ENCODE measurements at regions of chr7 and their contacts with region 1.

Region 1: GRCh38 chr7:108146070-108146837 is 16.1 kb upstream of the LAMB4 start:
- DNase-seq: peak; percentile 80
- H3K4me3 ChIP-seq: peak overlapping the region; percentile 39; the same call in 1 of the 2 replicates
- H3K27ac ChIP-seq: no peak overlapping the region
- H3K27me3 ChIP-seq: no peaks in the 10 kb centered on the region
- CTCF ChIP-seq: peak; percentile 98

Region 2: DNA sequence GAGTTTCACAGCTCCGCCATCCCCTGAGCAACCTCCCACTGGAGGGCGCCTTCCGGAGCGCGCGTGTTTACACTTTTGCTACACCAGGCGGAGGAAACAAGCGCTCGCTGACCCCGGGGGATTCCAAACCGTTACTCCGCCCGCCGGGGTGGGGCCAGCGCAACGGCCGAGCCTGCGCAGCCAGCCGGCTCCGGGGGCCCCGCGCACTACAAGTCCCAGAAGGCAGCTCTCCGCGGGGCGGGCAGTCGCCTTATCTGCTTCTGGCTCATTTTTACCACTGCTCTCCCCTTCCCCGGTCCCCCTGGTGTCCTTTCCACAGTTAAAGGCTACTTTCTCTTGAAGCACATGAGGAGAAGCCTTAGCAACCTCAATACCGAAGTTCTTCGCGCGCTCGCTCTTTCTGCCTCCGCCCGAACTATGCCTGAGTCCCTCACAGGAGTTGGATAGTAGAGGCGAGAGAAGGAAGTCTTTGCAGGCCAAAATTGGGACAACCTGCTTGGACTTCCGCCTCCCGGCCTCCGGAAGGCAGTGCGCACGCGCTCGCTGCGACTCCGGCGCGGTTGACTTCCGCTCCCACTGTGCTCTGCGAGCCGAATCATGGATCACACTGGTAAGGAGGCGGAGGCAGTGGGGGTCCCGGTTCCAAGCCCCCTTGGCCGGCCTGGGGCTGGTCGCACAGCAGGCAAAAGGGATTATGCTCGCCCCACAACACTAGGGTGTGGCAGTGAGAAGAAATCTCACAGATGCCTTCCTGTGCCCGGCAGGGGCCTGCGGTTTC is 402.5 kb before region 1 on chr7 and contains the start of gene CBLL1:
- CTCF ChIA-PET with region 1: interaction called, 12 read pairs
- POLR2A ChIA-PET with region 1: interaction called, 3 read pairs
- DNase-seq: peak; percentile 87
- H3K4me3 ChIP-seq: peak within 1 kb of the TSS; percentile 94
- H3K27ac ChIP-seq: peak within 1 kb of the TSS; percentile 99
- H3K27me3 ChIP-seq: no peaks in the 10 kb centered on the region
- CTCF ChIP-seq: peak; percentile 81
- polyA plus RNA-seq, gene CBLL1: 17.0 and 18.0 TPM in 2 replicates

Region 3: DNA sequence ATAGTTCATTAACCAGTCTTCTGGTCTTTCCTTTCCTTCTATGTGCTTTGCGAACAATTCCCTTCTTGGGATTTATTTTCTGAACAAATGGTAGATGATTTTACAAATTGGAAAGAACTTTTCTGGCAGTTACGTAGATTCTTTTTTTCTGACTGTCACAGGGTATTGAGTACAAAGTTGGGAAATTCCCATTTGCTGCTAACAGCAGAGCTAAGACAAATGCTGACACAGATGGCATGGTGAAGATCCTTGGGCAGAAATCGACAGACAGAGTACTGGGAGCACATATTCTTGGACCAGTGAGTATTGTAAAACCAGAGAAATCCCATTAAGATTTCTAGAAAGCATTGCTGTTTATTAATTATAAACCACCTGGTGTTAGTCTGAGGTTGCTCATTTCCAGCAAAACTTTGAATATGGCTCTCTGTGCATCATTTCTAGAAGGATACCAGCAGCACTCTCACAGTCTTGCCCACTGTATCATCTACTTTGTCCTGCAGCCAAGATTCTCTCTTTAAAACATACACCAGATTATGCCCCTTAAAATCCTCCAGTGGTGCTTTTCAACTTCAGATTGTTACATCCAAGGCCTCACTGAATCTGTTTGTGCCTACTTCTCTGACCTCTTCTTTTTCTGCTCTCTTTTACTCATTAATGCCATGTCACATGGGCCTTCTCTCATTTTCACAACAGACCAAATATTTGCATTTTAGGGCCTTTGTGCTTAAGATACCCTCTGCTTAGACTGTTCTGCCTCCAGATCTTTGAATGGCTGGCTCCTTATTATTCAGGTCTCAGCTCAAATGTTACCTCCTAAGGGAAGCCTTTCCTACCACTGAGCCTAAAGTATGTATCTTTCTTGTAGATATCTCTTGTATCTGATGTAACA is 228.2 kb before region 1 on chr7:
- CTCF ChIA-PET with region 1: interaction called, 18 read pairs
- POLR2A ChIA-PET with region 1: no interaction called
- DNase-seq: no peak
- H3K4me3 ChIP-seq: no peak overlapping the region
- H3K27ac ChIP-seq: no peak overlapping the region
- H3K27me3 ChIP-seq: no peaks in the 10 kb centered on the region
- CTCF ChIP-seq: no peak

Region 4: GRCh38 chr7:107958764-107959526 is 187.3 kb before region 1 on chr7:
- CTCF ChIA-PET with region 1: interaction called, 12 read pairs
- POLR2A ChIA-PET with region 1: no interaction called
- DNase-seq: no peak
- H3K4me3 ChIP-seq: no peak overlapping the region
- H3K27ac ChIP-seq: peak overlapping the region; percentile 3
- H3K27me3 ChIP-seq: no peaks in the 10 kb centered on the region
- CTCF ChIP-seq: no peak

Region 5: DNA sequence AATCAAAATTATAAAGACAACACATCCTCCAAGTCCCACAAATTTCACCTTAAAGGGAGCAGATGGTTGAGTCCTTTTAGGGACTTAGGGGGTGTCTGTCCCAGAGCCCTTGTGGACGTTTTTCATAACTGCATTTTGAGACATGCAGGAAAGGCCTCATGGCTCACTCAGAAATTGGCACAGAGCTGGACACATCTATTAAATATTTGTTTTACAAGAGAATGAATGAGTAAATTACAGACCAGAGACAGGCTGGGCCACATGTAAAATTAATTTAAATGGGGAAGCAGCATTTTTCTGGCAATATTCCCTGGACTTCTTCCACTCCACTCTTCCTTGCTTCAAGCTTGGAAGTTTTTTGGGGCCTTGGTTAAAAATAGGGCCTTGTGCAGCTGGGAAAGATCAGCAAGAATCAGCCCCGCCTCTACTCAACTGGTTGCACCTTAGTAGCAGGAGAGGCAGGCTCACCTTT is 163.3 kb before region 1 on chr7:
- CTCF ChIA-PET with region 1: interaction called, 27 read pairs
- POLR2A ChIA-PET with region 1: interaction called, 3 read pairs
- DNase-seq: no peak
- H3K4me3 ChIP-seq: no peak overlapping the region
- H3K27ac ChIP-seq: peak overlapping the region; percentile 39
- H3K27me3 ChIP-seq: no peaks in the 10 kb centered on the region
- CTCF ChIP-seq: peak; percentile 43

Region 6: DNA sequence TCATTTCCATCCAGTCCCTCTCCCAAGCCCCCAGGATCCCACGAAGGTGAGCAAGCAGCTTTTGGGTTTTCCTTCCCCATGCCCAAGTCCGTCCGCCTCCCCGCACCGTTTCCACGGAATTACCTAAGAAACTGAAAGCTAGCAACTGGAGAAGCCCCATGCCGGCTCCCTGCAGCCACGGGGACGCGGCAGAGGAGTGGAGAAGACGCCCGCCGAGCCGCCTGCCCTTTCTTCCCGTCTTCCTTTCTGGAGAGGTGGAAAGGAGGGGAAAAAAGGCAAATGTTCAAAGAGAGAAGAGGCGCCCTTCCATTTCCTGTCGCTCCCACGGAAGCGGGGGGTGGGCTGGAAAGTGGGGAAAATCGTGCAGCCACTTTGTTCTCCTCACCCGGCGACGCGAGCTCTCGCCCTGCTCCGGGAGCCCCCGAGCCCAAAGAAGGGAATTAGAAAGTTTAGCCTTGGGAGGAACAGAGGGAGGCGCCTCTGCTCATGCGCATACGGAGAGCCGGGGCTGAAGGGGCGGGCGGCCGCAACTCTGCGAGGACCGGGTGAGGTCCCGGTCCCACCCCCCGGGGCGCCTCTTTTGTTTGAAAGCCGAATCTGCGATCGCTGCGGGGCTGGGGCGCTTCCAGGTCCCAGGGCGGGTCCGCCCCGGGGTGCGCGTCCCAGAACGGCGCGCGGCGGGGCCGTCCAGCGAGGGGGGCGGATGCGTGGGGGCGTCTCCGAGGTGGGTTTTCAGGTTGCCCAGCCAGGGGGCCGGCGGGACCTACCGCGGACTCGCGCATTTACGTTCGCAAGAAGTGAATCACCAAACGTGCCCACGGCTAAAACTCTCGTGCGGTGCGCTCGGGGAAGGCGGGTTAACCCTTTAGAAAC is 143.3 kb before region 1 on chr7 and contains the start of gene LAMB1:
- CTCF ChIA-PET with region 1: interaction called, 24 read pairs
- POLR2A ChIA-PET with region 1: interaction called, 4 read pairs
- DNase-seq: no peak
- H3K4me3 ChIP-seq: peak within 1 kb of the TSS; percentile 84
- H3K27ac ChIP-seq: peak within 1 kb of the TSS; percentile 86
- H3K27me3 ChIP-seq: no peaks in the 10 kb centered on the region
- CTCF ChIP-seq: no peak
- polyA plus RNA-seq, gene LAMB1: 266 and 290 TPM in 2 replicates

Region 7: DNA sequence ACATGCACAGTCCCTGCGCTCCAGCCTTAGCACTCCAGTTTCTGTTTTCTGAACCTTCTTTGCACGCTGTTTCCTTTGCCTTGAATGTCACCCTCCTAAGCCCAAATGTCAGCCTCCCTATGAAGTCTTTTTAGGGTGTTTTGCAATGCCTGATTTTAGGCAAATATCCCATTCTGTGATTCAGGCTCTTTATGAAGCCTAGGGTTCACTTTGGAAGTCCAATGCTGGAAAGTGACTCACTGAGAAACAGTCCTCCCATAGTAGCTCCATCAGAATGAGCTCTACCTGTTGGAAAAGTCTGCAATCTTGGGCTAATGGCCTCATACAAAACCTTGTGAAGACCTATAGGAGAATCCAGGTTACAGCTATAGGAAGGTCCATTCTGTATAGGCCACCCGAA is 21.4 kb before region 1 on chr7:
- CTCF ChIA-PET with region 1: no interaction called
- POLR2A ChIA-PET with region 1: no interaction called
- DNase-seq: no peak
- H3K4me3 ChIP-seq: no peak overlapping the region
- H3K27ac ChIP-seq: no peak overlapping the region
- H3K27me3 ChIP-seq: no peaks in the 10 kb centered on the region
- CTCF ChIP-seq: no peak

Region 8: DNA sequence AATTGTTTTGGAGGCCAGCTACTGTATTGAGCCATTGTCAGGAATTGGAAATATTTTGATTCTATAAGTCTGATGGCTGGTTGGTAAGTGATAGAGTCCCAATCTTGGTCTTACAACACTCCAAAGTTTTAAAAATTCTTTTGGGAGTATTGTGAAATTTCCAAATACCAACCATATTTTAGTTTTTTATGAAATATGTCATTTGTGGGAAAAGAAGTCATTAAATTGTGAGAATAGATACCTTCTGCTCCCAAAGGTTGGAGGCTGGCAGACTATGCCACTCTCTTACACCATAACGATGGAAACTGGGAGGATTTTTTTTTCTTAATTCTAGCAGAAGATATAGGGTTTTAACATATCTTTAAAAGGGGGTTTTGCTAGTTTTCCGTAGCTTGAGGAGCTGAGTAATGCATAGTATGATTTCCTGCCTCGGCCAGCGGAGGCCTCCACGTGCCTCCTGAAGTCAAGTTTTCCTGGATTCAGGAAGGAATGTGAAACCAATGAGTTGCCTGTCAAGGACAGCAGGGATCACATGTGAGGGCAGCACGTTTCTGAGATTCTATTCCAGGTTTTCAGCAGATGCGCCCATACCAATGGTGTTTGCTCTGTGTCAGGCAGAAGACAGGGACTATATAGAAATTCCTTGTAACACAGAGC is 76.1 kb after region 1 on chr7:
- CTCF ChIA-PET with region 1: no interaction called
- POLR2A ChIA-PET with region 1: no interaction called
- DNase-seq: no peak
- H3K4me3 ChIP-seq: no peak overlapping the region
- H3K27ac ChIP-seq: no peak overlapping the region
- H3K27me3 ChIP-seq: no peaks in the 10 kb centered on the region
- CTCF ChIP-seq: peak; percentile 18

Measured in AG04450 (cell line).